Left ventricle myocardium inferior (tissue), 1 donor: ENCODE measurements at regions of chr5 and their contacts with region 1.

Region 1: GRCh38 chr5:174311531-174312269 is 266.2 kb downstream of the NSG2 start:
- DNase-seq: peak; percentile 67
- H3K4me3 ChIP-seq: peak overlapping the region; percentile 66
- H3K27ac ChIP-seq: no peak overlapping the region
- H3K4me1 ChIP-seq: peaks cover 15% of the 10 kb centered on the region
- H3K27me3 ChIP-seq: peaks cover 53% of the 10 kb centered on the region
- CTCF ChIP-seq: peak; percentile 89

Region 2: DNA sequence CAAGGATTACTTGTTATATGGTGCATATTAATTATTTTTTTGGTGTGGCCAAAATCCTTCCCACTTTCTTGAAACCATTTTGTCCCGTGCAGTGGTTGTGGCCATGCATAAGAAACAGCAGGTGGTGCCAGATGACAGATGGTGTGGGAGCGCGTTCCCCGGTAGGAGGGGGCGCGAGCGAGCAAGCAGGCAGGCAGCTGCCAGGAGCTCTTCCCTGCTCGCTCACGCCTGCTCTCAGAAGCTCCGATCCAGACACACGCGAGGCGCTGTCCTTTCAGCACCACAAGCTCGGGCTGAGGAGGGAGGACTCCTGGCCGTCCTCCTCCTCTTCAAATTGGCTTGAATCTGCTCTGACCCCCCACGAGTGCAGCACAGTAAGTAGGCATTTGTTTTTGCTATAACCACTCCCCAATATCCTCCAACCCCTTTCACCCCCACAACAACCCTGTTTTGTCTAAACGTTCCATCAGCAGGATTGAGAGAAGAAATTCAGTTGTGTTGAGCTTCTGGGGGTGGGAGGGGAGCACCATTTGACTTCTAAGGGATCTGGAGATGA is 266.2 kb before region 1 on chr5 and contains the start of gene NSG2:
- intact Hi-C with region 1: loop called (anchors 10 kb)
- DNase-seq: peak; percentile 79
- H3K4me3 ChIP-seq: no peak within 1 kb of the TSS
- H3K27ac ChIP-seq: no peak within 1 kb of the TSS
- H3K4me1 ChIP-seq: no peaks in the 10 kb centered on the region
- H3K27me3 ChIP-seq: peaks cover 8% of the 10 kb centered on the region
- CTCF ChIP-seq: peak; percentile 74
- total RNA-seq, gene NSG2: 0.08 TPM

Region 3: DNA sequence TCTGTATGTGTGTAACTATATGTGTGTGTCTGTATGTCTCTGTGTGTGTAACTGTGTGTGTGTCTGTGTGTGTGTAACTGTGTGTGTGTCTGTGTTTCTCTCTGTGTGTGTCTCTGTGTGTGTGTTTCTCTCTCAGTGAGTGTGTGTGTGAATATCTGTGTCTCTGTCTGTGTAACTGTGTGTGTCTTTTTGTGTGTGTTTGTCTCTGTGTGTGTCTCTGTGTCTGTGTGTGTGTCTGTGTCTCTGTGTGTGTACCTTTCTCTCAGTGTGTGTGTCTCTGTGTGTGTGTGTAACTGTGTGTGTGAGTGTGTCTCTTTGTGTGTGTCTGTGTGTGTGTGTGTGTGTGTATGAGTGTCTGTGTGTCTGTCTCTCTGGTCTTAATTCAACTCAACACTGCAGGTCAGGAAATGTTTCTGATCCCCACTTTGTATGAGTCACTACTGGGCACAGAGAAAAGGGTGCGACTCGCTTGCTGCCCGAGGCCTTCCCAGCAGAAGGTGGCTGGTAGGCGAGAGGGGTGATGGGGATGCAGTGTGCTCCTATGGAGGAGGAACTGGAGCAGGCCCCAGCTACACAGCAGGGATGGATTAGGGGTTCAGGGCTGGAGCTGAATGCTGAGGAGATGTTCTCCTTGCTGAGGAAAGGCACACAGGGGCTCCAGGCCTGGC is 214.0 kb before region 1 on chr5:
- intact Hi-C with region 1: no loop called
- DNase-seq: no peak
- H3K4me3 ChIP-seq: no peak overlapping the region
- H3K27ac ChIP-seq: no peak overlapping the region
- H3K4me1 ChIP-seq: no peaks in the 10 kb centered on the region
- H3K27me3 ChIP-seq: peaks cover 15% of the 10 kb centered on the region
- CTCF ChIP-seq: no peak

Region 4: DNA sequence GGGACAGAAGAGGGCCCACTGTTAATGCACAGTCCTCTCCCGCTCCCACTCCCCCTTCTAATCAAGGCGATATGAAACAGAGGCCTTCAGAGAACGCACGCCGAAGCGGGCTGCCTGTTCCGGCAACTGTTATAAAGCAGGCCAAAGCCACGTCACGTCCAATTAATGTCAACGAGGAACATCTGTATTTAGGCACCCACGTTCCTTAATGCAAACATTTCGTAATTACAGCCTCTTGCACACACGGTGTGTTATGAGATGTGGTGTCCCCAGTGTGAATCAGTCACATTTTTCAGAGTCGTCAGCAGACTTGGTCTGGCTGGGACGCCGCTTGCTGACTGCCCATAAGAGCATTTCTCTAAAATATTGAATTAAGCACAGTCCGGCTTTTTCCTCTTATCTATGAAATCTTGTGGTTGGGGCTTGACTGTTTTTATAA is 72.8 kb after region 1 on chr5:
- intact Hi-C with region 1: no loop called
- DNase-seq: no peak
- H3K4me3 ChIP-seq: no peak overlapping the region
- H3K27ac ChIP-seq: no peak overlapping the region
- H3K4me1 ChIP-seq: no peaks in the 10 kb centered on the region
- H3K27me3 ChIP-seq: peaks cover 50% of the 10 kb centered on the region
- CTCF ChIP-seq: no peak